ENCODE measurements at regions of chr7 and their contacts with region 1.

Region 1: GRCh38 chr7:139441961-139442360 is 41.5 kb downstream of the KLRG2 start:
- DNase-seq: no peak

Region 2: GRCh38 chr7:139471740-139472353 is 29.9 kb after region 1 on chr7:
- intact Hi-C with region 1: loop called in 1 of 2 experiments (anchors 2 kb)
- DNase-seq: no peak

Region 3: GRCh38 chr7:141027043-141027442 is 1585.1 kb after region 1 on chr7:
- intact Hi-C with region 1: no loop called
- DNase-seq: no peak

Measured in posterior vena cava (tissue), 2 donors.